Dorsolateral prefrontal cortex (tissue), 120 donors: ENCODE measurements at regions of chr18 and their contacts with region 1.

Region 1: GRCh38 chr18:63439334-63439733 is 17.1 kb upstream of the VPS4B start:
- DNase-seq: peak in 4 of 10 donors; percentile 15 to 51 (median 42)
- H3K4me3 ChIP-seq: peak overlapping the region in 2 of 59 donors; percentile 14 to 25
- H3K27ac ChIP-seq: no peak overlapping the region
- H3K27me3 ChIP-seq: peaks cover 0 to 4% (median 0%) of the 10 kb centered on the region in 45 donors
- CTCF ChIP-seq: peak; percentile 42 to 95 (median 79)

Region 2: DNA sequence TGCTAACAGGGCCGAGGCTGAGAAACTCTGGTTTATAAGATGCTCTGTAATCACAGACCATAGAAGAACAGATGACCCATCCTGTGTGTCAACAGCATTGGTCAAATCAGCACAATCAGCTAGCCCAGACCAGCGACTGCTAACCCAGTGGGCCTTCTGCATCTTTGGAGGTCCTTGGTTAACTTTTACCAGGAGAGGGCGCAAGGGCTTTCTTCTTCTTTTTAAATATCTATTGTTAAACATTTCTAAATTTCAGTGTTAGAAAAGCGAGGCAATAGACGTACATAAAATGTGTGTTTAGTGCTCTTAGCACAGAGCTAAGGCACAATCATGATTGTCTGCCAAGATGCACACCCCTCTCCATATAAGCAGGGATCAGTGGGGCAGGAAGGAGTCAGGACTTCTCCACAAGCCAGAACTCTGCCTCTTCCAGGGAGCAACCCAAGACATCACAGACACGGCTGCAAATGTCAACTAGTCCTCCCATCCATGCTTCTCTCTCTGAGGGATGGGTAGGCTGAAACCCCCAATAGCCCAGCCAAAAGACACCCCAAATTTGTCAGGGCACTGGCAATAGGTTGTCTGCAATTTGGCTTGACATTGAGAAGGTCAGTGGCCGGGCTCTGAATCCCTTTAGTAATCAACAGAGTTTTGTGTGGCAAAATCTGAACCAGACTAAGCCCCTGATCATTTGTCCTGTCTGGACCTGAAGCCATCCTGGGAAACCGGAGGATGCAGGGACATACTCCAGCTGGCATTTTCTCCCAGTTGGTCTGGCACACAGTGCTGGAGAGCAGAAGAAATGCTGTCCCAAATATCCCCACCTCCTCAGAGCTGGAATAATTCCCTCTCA is 308.0 kb before region 1 on chr18:
- intact Hi-C with region 1: loop called (anchors 5 to 10 kb)
- DNase-seq: peak in 2 of 10 donors; percentile 53 to 71
- H3K4me3 ChIP-seq: peak overlapping the region in 2 of 59 donors; percentile 4 to 8
- H3K27ac ChIP-seq: peak overlapping the region in 35 of 59 donors; percentile 7 to 67 (median 41)
- H3K27me3 ChIP-seq: no peaks in the 10 kb centered on the region
- CTCF ChIP-seq: peak; percentile 22 to 79 (median 66)

Region 3: GRCh38 chr18:63339920-63340484 is 99.3 kb before region 1 on chr18:
- intact Hi-C with region 1: loop called in 1 of 2 experiments (anchors 5 kb)
- DNase-seq: peak in 1 of 10 donors; percentile 46
- H3K4me3 ChIP-seq: no peak overlapping the region
- H3K27ac ChIP-seq: no peak overlapping the region
- H3K27me3 ChIP-seq: no peaks in the 10 kb centered on the region
- CTCF ChIP-seq: peak; percentile 36 to 75 (median 57)